ENCODE measurements at regions of chr3 and their contacts with region 1.

Region 1: GRCh38 chr3:51718547-51719409 is 11.9 kb downstream of the GRM2 start:
- DNase-seq: peak; percentile 92
- ATAC-seq: peak; percentile 87
- H3K4me3 Mint-ChIP-seq: no peak overlapping the region
- H3K27ac Mint-ChIP-seq: no peak overlapping the region
- H3K4me1 Mint-ChIP-seq: peaks cover 16% of the 10 kb centered on the region
- H3K27me3 Mint-ChIP-seq: peaks cover 3% of the 10 kb centered on the region; the same call in 1 of the 2 replicates
- CTCF ChIP-seq: peak; percentile 60

Region 2: DNA sequence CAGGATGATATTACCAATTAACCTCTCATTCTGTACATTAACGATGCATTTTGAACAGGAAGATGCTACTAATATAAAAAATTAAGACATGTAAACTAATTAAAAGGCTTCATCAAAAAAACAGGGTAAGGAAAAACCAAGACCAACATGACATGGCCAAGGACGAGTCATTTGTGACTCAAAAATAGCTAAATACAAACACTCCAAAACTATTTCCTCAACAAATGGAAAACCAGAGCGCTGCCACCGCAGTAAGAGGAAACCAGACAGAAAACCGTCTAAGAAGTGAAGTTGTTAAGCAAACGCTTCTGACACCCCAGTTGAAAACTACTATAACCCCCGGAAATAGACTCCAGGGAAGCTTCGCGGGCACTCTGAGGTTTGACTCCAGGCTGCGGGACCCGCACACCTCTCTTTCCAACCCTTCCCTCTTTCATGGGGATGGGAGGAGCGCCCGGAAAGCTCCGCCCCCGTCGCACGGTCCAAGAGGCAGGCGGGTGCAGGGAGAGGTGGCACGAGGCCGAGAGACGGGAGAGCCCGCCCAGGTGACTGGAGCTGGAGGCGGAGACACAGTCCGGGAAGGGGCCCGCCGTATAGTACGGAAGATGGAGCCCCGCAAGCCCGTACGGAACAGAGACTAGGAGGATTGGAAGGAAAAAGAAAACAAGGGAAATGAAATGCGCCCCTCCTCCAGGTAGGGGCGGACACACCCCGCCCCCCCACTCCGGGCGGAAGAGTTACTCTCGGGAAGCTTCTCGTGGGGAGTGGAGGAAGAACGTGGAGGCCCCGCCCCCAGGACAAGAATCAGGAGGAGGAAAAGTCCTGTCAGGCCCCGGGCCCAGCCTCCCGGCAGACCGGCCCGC is 219.7 kb before region 1 on chr3:
- CTCF ChIA-PET with region 1: interaction called, 17 read pairs
- POLR2A ChIA-PET with region 1: interaction called, 7 read pairs
- DNase-seq: peak; percentile 97
- ATAC-seq: peak; percentile 85
- H3K4me3 Mint-ChIP-seq: peak overlapping the region; percentile 94
- H3K27ac Mint-ChIP-seq: peak overlapping the region; percentile 97
- H3K4me1 Mint-ChIP-seq: 0 out of 2 replicates have a peak, but pooled peaks cover 5% of the 10 kb centered on the region
- H3K27me3 Mint-ChIP-seq: no peaks in the 10 kb centered on the region
- CTCF ChIP-seq: no peak

Region 3: GRCh38 chr3:51620543-51620942 is 98.2 kb before region 1 on chr3:
- CTCF ChIA-PET with region 1: no interaction called
- POLR2A ChIA-PET with region 1: no interaction called
- DNase-seq: no peak
- ATAC-seq: no peak
- H3K4me3 Mint-ChIP-seq: 0 out of 2 replicates have a peak overlapping the region, but pooled peaks have one; percentile 26
- H3K27ac Mint-ChIP-seq: peak overlapping the region; percentile 94
- H3K4me1 Mint-ChIP-seq: peaks cover 17% of the 10 kb centered on the region
- H3K27me3 Mint-ChIP-seq: no peaks in the 10 kb centered on the region
- CTCF ChIP-seq: no peak

Region 4: GRCh38 chr3:51692980-51693395 is 25.8 kb before region 1 on chr3:
- CTCF ChIA-PET with region 1: interaction called, 23 read pairs
- POLR2A ChIA-PET with region 1: no interaction called
- DNase-seq: no peak
- ATAC-seq: no peak
- H3K4me3 Mint-ChIP-seq: no peak overlapping the region
- H3K27ac Mint-ChIP-seq: no peak overlapping the region
- H3K4me1 Mint-ChIP-seq: peaks cover 6% of the 10 kb centered on the region
- H3K27me3 Mint-ChIP-seq: no peaks in the 10 kb centered on the region
- CTCF ChIP-seq: no peak

Region 5: GRCh38 chr3:51734572-51734907 is 15.8 kb after region 1 on chr3:
- CTCF ChIA-PET with region 1: interaction called, 19 read pairs
- POLR2A ChIA-PET with region 1: no interaction called
- DNase-seq: no peak
- ATAC-seq: peak; percentile 38
- H3K4me3 Mint-ChIP-seq: no peak overlapping the region
- H3K27ac Mint-ChIP-seq: no peak overlapping the region
- H3K4me1 Mint-ChIP-seq: peaks cover 25% of the 10 kb centered on the region
- H3K27me3 Mint-ChIP-seq: peaks cover 8% of the 10 kb centered on the region
- CTCF ChIP-seq: no peak

Region 6: DNA sequence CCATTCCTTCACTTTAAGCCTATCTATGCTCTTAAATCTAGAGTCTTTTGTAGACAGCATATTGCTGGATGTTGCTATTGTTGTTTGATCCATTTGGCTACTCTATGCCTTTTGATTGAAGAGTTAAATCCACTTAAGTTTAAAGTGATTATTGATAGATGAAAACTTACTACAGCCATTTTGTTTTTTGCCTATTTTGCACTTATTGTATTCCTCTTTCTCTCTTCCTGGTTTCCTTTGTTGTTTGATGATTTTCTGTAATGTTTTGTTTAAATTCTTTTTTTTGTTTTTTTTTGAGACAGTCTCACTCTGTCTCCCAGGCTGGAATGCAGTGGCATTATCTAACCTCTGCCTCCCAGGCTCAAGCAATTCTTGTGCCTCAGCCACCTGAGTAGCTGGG is 40.4 kb after region 1 on chr3:
- CTCF ChIA-PET with region 1: no interaction called
- POLR2A ChIA-PET with region 1: no interaction called
- DNase-seq: no peak
- ATAC-seq: no peak
- H3K4me3 Mint-ChIP-seq: no peak overlapping the region
- H3K27ac Mint-ChIP-seq: no peak overlapping the region
- H3K4me1 Mint-ChIP-seq: no peaks in the 10 kb centered on the region
- H3K27me3 Mint-ChIP-seq: peaks cover 4% of the 10 kb centered on the region; the same call in 1 of the 2 replicates
- CTCF ChIP-seq: no peak

Region 7: DNA sequence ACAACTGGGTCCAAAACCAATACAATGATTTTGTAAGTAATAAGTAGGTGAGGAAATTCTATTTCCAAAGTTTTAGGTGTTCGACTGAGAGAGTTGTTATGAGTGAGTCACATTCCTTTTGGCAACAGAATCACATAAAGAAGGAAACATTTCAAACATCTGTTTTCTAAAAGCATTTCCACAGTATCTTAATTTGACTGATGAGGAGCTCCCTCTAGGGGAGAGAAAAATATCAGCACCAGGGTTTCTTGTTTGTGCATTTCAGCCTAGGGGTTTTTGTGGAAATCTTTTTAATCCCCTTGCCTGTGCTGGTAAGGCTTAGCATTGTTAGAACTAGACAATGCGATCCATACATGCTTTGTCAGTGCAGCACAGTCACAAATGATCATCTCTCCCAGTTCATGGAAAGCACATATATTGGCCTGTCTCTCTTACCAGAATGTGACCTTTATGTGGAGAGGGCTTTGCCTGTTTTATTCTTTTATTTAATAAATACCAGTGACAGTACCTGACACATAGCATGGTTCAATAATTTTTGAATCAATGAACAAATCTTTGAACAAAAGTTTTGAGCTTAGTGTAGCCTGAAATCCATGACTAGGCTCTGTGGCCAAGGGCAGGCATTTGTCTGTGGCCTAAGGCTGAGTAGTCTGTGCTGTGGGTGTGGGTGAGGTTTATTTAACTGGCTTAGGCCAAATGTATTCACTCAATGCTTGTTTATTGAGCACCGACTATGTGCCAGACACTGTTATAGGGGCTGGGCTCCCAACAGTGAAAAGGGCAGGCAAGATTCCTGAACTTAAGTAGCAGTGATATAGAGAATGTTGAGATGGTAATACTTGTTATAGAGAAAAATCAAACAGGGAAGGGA is 81.3 kb after region 1 on chr3:
- CTCF ChIA-PET with region 1: interaction called, 190 read pairs
- POLR2A ChIA-PET with region 1: interaction called, 3 read pairs
- DNase-seq: no peak
- ATAC-seq: no peak
- H3K4me3 Mint-ChIP-seq: no peak overlapping the region
- H3K27ac Mint-ChIP-seq: peak overlapping the region; percentile 58; the same call in 1 of the 2 replicates
- H3K4me1 Mint-ChIP-seq: peaks cover 70% of the 10 kb centered on the region
- H3K27me3 Mint-ChIP-seq: no peaks in the 10 kb centered on the region
- CTCF ChIP-seq: peak; percentile 73

Region 8: DNA sequence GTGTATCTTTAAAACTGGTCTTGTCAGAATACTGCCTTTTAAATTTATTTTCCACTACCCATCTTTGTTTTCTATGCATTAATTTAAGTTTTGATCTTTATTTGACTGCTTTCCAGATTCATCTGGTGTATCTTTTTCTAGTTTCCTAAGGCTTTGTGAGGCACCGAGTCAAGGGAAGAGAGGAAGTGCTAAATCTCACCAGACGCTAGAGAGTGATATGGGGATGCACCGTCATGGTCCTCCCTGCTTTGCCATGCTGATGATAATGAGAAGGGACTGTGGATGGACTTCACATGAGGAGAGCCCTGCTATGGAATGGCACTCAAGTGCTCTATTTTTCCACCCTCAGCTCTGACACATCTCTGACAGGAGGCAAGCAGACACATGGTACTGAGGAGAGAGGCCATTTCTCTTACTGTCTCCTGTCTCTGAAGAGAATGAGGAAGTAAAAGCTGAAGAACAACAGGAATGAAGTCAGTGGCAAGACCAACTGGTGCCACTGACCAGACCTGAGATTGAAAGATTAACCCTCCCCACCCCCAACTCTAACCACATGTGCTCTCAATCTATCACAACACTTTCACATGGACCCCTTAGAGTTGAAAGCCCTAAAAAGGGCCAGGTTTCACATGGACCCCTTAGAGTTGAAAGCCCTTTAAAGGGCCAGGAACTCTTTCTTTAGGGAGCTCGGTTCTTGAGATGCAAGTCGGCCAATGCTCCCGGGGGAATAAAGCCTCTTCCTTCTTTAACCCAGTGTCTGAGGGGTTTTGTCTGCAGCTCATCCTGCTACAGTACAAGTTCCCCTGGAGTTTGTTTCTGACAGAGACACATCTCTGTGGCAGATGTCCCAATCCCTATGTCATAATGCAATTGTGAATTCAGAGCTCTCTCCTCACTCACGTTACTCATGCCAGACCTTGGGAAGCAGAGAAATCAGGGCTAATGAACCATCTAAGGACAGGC is 142.2 kb after region 1 on chr3 and contains the start of gene IQCF2:
- CTCF ChIA-PET with region 1: interaction called, 10 read pairs
- POLR2A ChIA-PET with region 1: no interaction called
- DNase-seq: no peak
- ATAC-seq: no peak
- H3K4me3 Mint-ChIP-seq: no peak within 1 kb of the TSS
- H3K27ac Mint-ChIP-seq: no peak within 1 kb of the TSS
- H3K4me1 Mint-ChIP-seq: peaks cover 5% of the 10 kb centered on the region; the same call in 1 of the 2 replicates
- H3K27me3 Mint-ChIP-seq: peaks cover 8% of the 10 kb centered on the region; the same call in 1 of the 2 replicates
- CTCF ChIP-seq: no peak
- total RNA-seq, gene IQCF2: not detected in 3 replicates

Measured in WTC11 (cell line).